Adrenal gland (tissue), 19 donors: ENCODE measurements at regions of chr7 and their contacts with region 1.

Region 1: DNA sequence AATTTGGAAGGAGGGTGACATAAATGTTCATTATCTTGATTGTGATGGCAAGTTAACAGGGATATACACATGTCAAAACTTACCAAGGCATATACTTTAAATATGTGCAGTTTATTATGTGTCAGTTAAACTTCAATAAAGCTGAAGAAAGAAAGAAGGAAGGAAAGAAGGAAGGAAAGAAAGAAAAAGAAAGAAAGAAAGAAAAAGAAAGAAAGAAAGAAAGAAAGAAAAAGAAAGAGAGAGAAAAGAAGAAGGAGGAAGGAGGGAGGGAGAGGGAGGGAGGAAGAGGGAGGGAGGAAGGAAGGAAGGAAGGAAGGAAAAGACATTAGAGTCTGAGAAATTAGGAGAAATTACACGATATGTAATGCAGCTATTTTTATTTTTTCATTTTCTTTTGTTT is 15.9 kb upstream of the GSTK1 start:
- DNase-seq: no peak
- H3K4me3 ChIP-seq: no peak overlapping the region
- H3K27ac ChIP-seq: no peak overlapping the region
- H3K4me1 ChIP-seq: no peaks in the 10 kb centered on the region
- H3K27me3 ChIP-seq: no peaks in the 10 kb centered on the region
- CTCF ChIP-seq: no peak
- POLR2A ChIP-seq: no peak

Region 2: DNA sequence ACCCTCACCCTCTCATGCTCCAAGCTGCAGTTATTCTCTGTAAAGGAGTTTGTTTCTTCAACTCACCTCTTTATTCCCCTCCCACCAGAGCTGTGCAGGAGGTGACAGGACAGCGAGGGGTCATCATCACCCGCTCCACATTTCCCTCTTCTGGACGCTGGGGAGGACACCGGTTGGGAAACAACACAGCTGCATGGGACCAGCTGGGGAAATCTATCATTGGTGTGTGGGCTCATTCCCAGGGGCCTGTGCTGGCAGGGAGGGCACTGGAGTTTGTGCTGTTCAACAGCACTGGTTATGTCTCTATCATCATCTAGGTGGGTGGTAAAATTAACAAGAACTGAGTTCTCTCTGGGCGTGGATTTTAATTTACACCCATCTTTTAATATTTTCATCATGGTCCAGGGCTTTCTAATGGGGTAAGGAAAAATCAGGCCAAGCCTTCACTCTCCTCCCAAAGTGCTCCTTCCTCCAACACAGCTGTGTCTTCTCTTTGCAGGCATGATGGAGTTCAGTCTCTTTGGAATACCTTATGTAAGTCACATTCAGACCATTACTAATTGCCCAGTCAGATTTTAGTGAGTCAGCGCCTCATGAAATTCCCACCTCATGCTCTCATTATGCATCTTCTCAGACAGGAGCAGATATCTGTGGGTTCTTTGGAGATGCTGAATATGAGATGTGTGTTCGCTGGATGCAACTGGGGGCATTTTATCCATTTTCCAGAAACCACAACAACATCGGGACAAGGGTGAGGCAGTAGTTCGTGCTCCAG is 1051.1 kb before region 1 on chr7:
- intact Hi-C with region 1: no loop called
- DNase-seq: no peak
- H3K4me3 ChIP-seq: no peak overlapping the region
- H3K27ac ChIP-seq: no peak overlapping the region
- H3K4me1 ChIP-seq: no peaks in the 10 kb centered on the region
- H3K27me3 ChIP-seq: no peaks in the 10 kb centered on the region
- CTCF ChIP-seq: no peak
- POLR2A ChIP-seq: no peak

Region 3: GRCh38 chr7:143287935-143288826 is 40.8 kb after region 1 on chr7 and contains the start of gene CASP2:
- intact Hi-C with region 1: loop called in 1 of 2 experiments (anchors 2 kb)
- DNase-seq: peak; percentile 98 to 99 (median 99)
- H3K4me3 ChIP-seq: peak within 1 kb of the TSS; percentile 43 to 99 (median 66)
- H3K27ac ChIP-seq: peak within 1 kb of the TSS in 4 of 5 donors; percentile 64 to 92 (median 78)
- H3K4me1 ChIP-seq: peaks cover 4 to 29% of the 10 kb centered on the region in 2 donors
- H3K27me3 ChIP-seq: no peaks in the 10 kb centered on the region
- CTCF ChIP-seq: peak; percentile 26 to 43 (median 28)
- POLR2A ChIP-seq: peak in 1 of 2 donors; percentile 59
- total RNA-seq, gene CASP2: 8.9 to 25.4 (median 13.4) TPM